ENCODE measurements at regions of chr15 and their contacts with region 1.

Region 1: GRCh38 chr15:34889476-34889875 is 80.1 kb downstream of the AQR start:
- DNase-seq: no peak
- H3K4me3 ChIP-seq: no peak overlapping the region
- H3K27ac ChIP-seq: no peak overlapping the region
- H3K4me1 ChIP-seq: no peaks in the 10 kb centered on the region
- H3K27me3 ChIP-seq: no peaks in the 10 kb centered on the region
- CTCF ChIP-seq: no peak

Region 2: GRCh38 chr15:34933432-34933975 is 44.0 kb after region 1 on chr15:
- CTCF ChIA-PET with region 1: no interaction called
- POLR2A ChIA-PET with region 1: no interaction called
- intact Hi-C with region 1: loop called (anchors 10 kb)
- DNase-seq: no peak
- H3K4me3 ChIP-seq: no peak overlapping the region
- H3K27ac ChIP-seq: no peak overlapping the region
- H3K4me1 ChIP-seq: no peaks in the 10 kb centered on the region
- H3K27me3 ChIP-seq: no peaks in the 10 kb centered on the region
- CTCF ChIP-seq: no peak

Region 3: GRCh38 chr15:36707884-36708435 is 1818.5 kb after region 1 on chr15:
- CTCF ChIA-PET with region 1: no interaction called
- POLR2A ChIA-PET with region 1: interaction called, 12 read pairs
- intact Hi-C with region 1: no loop called
- DNase-seq: no peak
- H3K4me3 ChIP-seq: no peak overlapping the region
- H3K27ac ChIP-seq: no peak overlapping the region
- H3K4me1 ChIP-seq: no peaks in the 10 kb centered on the region
- H3K27me3 ChIP-seq: no peaks in the 10 kb centered on the region
- CTCF ChIP-seq: no peak